ENCODE measurements at regions of chr2 and their contacts with region 1.

Region 1: DNA sequence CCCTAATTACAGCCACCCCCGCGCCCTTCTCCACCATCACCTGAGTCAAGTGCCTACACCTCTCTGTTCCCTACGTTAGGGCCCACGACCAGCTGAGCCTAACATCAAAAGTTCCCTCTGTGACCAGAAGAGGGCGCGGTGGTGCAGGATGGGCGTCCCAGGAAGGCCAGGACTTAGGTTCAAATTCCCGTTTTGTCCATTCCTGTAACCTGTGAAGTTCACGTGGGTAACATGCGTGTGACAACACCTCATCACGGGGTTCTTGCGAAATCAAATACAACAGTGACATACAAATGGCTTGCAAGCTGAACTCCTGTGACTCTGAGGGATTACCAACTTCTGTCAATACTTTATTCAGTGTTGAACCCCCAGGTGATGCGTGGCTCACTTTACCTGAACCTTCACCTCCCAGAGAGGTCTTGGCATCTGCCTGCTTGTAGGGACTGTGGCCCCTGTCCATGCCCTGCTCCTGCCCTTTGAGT is 207.9 kb downstream of the ARL4C start:
- DNase-seq: peak; percentile 62 to 90 (median 72)
- ATAC-seq: peak; percentile 3
- H3K4me3 ChIP-seq: no peak overlapping the region
- H3K4me3 Mint-ChIP-seq: peak overlapping the region; percentile 31
- H3K27ac ChIP-seq: peak overlapping the region; percentile 96 to 99
- H3K27ac Mint-ChIP-seq: peak overlapping the region; percentile 98
- H3K4me1 ChIP-seq: peaks cover 54% of the 10 kb centered on the region
- H3K4me1 Mint-ChIP-seq: peaks cover 57% of the 10 kb centered on the region
- H3K27me3 ChIP-seq: no peaks in the 10 kb centered on the region
- H3K27me3 Mint-ChIP-seq: no peaks in the 10 kb centered on the region
- CTCF ChIP-seq: peak; percentile 88

Region 2: GRCh38 chr2:234135720-234136221 is 153.2 kb before region 1 on chr2:
- CTCF ChIA-PET with region 1: interaction called, 4 read pairs
- POLR2A ChIA-PET with region 1: interaction called, 3 read pairs
- intact Hi-C with region 1: loop called (anchors 2 to 5 kb)
- DNase-seq: peak; percentile 23 to 77 (median 32)
- ATAC-seq: peak; percentile 66
- H3K4me3 ChIP-seq: no peak overlapping the region
- H3K4me3 Mint-ChIP-seq: no peak overlapping the region
- H3K27ac ChIP-seq: no peak overlapping the region
- H3K27ac Mint-ChIP-seq: peak overlapping the region; percentile 63
- H3K4me1 ChIP-seq: peaks cover 32% of the 10 kb centered on the region
- H3K4me1 Mint-ChIP-seq: peaks cover 37% of the 10 kb centered on the region
- H3K27me3 ChIP-seq: no peaks in the 10 kb centered on the region
- H3K27me3 Mint-ChIP-seq: no peaks in the 10 kb centered on the region
- CTCF ChIP-seq: peak; percentile 84

Region 3: GRCh38 chr2:234191819-234192407 is 97.1 kb before region 1 on chr2:
- CTCF ChIA-PET with region 1: no interaction called
- POLR2A ChIA-PET with region 1: no interaction called
- intact Hi-C with region 1: no loop called
- DNase-seq: no peak
- ATAC-seq: no peak
- H3K4me3 ChIP-seq: no peak overlapping the region
- H3K4me3 Mint-ChIP-seq: no peak overlapping the region
- H3K27ac ChIP-seq: no peak overlapping the region
- H3K27ac Mint-ChIP-seq: no peak overlapping the region
- H3K4me1 ChIP-seq: no peaks in the 10 kb centered on the region
- H3K4me1 Mint-ChIP-seq: no peaks in the 10 kb centered on the region
- H3K27me3 ChIP-seq: no peaks in the 10 kb centered on the region
- H3K27me3 Mint-ChIP-seq: no peaks in the 10 kb centered on the region
- CTCF ChIP-seq: no peak

Region 4: DNA sequence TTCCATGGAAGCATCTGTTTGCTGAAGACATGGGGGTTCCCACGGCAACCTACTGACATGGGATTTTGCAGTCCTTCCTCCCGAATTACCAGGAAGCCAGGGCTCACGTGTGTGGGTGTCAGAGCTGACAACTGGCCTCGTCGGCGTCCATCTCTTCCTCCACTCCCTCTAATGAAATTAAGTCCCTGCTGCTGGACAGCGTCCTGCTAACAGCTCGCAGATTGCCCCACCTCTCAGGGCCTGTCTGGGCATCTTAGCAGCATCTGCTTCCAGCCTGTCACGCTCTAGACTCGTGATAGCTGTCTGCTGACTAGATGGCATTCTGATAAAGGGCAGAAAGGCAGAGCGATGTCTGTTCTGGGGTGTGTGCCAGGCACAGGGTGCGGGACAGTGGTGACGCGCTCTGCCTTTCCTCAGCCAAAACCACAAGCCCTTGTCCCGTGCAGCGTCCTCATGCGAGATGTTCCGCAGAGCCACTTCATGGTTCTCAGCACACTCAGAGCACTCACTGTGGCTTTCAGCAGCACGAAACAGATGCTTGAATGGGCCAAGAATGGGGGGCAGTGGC is 46.7 kb after region 1 on chr2:
- CTCF ChIA-PET with region 1: no interaction called
- POLR2A ChIA-PET with region 1: interaction called, 6 read pairs
- intact Hi-C with region 1: loop called in 1 of 2 experiments (anchors 1 kb)
- DNase-seq: peak; percentile 21 to 92 (median 53)
- ATAC-seq: peak; percentile 93
- H3K4me3 ChIP-seq: no peak overlapping the region
- H3K4me3 Mint-ChIP-seq: peak overlapping the region; percentile 75
- H3K27ac ChIP-seq: no peak overlapping the region
- H3K27ac Mint-ChIP-seq: peak overlapping the region; percentile 83
- H3K4me1 ChIP-seq: peaks cover 19% of the 10 kb centered on the region
- H3K4me1 Mint-ChIP-seq: peaks cover 38% of the 10 kb centered on the region
- H3K27me3 ChIP-seq: no peaks in the 10 kb centered on the region
- H3K27me3 Mint-ChIP-seq: no peaks in the 10 kb centered on the region
- CTCF ChIP-seq: no peak

Region 5: DNA sequence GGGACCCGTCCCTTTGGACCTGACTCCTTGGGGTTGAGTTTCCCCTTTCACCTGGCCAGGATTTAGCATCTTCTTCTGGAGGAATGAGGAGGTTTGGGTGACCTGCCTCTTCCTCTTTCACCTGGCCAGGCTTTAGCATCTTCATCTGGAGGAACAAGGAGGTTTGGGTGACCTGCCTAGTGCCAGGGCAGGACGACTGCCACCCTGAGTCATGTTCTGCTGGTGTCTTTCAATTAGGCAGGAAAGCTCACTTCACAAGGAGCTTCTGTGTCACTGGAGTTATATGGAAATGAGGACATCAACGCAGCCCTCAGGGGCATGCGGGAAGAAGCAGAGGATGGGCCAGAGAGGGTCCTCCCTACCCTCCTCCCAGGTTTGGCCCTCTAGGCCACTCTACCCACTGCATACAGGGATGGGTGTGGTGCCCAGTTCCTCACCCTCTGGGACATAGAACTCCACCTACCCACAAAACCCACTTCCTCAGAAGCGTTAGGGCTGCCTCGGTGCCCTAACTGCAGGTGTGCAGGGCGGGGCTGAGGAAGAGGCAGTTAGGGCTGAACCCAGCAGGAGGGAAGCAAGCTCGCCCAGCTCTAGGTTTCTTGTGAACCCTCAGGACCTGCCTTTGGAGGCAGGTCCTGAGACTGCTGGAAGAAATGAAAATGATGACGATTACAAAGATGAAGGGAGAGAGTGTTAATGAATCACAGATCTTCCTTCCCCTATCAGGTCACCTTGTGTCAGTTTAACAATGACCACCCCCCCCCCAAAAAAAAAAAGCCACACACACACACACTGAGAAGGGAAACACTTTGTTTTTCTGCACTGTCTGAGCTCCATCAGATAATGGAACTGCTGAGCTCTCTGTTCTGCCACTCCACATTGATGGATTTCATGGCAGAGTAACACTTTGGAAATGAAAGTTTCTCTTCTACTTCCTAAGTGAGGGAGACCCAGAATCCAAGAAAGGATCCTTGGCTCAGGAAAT is 136.9 kb after region 1 on chr2:
- CTCF ChIA-PET with region 1: interaction called, 9 read pairs
- POLR2A ChIA-PET with region 1: interaction called, 144 read pairs
- intact Hi-C with region 1: loop called (anchors 1 to 10 kb)
- DNase-seq: peak; percentile 70 to 95 (median 82)
- ATAC-seq: peak; percentile 70
- H3K4me3 ChIP-seq: peak overlapping the region; percentile 5
- H3K4me3 Mint-ChIP-seq: peak overlapping the region; percentile 88
- H3K27ac ChIP-seq: peak overlapping the region; percentile 78 to 87
- H3K27ac Mint-ChIP-seq: peak overlapping the region; percentile 97
- H3K4me1 ChIP-seq: peaks cover 90% of the 10 kb centered on the region
- H3K4me1 Mint-ChIP-seq: peaks cover 97% of the 10 kb centered on the region
- H3K27me3 ChIP-seq: no peaks in the 10 kb centered on the region
- H3K27me3 Mint-ChIP-seq: no peaks in the 10 kb centered on the region
- CTCF ChIP-seq: no peak

Region 6: DNA sequence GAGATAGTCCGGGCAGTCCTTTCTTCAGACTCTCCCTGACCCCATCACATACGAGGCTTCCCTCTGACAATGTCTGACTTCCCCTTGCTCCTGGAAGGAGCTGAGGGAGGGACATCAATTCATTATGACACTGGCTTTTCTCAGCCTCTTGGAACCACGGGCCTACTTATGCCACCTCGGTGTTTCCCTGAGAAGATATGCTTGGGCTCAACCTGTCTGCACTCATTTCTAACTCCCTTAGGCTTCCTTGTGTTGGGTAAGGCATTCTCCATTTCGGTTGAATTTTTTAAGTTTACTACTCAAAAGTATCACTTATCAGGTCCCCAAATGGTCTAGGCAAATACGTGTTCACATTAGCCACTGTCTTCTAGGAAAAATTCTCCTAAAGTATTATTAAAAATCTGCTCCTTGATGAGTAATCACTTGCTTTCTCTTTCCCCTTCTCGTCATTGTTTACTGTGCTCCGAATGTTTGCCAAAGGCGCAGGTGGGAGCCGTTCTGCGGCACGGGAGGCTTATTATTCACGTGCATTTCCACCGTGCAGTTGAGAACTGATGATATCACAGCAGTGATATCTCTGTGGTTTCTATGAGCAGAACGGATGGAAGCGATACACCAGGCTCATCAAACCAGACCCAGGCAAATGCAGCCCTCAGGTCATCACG is 174.7 kb after region 1 on chr2:
- CTCF ChIA-PET with region 1: interaction called, 4 read pairs
- POLR2A ChIA-PET with region 1: interaction called, 38 read pairs
- intact Hi-C with region 1: loop called in 1 of 2 experiments (anchors 1 kb)
- DNase-seq: peak; percentile 64 to 93 (median 77)
- ATAC-seq: peak; percentile 89
- H3K4me3 ChIP-seq: peak overlapping the region; percentile 25
- H3K4me3 Mint-ChIP-seq: peak overlapping the region; percentile 84
- H3K27ac ChIP-seq: peak overlapping the region; percentile 81 to 93
- H3K27ac Mint-ChIP-seq: peak overlapping the region; percentile 89
- H3K4me1 ChIP-seq: peaks cover 72% of the 10 kb centered on the region
- H3K4me1 Mint-ChIP-seq: peaks cover 82% of the 10 kb centered on the region
- H3K27me3 ChIP-seq: no peaks in the 10 kb centered on the region
- H3K27me3 Mint-ChIP-seq: no peaks in the 10 kb centered on the region
- CTCF ChIP-seq: no peak

Region 7: GRCh38 chr2:234494361-234495250 is 205.6 kb after region 1 on chr2:
- CTCF ChIA-PET with region 1: interaction called, 17 read pairs
- POLR2A ChIA-PET with region 1: interaction called, 211 read pairs
- intact Hi-C with region 1: loop called (anchors 1 kb)
- DNase-seq: peak in 8 of 14 experiments; percentile 21 to 80 (median 46)
- ATAC-seq: peak; percentile 33
- H3K4me3 ChIP-seq: peak overlapping the region; percentile 94
- H3K4me3 Mint-ChIP-seq: peak overlapping the region; percentile 98
- H3K27ac ChIP-seq: peak overlapping the region; percentile 70 to 96
- H3K27ac Mint-ChIP-seq: peak overlapping the region; percentile 98
- H3K4me1 ChIP-seq: peaks cover 42% of the 10 kb centered on the region
- H3K4me1 Mint-ChIP-seq: peaks cover 65% of the 10 kb centered on the region
- H3K27me3 ChIP-seq: no peaks in the 10 kb centered on the region
- H3K27me3 Mint-ChIP-seq: peaks cover 5% of the 10 kb centered on the region
- CTCF ChIP-seq: no peak

Measured in CD4-positive, alpha-beta T cell (primary cell).